MCF 10A (cell line): ENCODE measurements at regions of chr1 and their contacts with region 1.

Region 1: DNA sequence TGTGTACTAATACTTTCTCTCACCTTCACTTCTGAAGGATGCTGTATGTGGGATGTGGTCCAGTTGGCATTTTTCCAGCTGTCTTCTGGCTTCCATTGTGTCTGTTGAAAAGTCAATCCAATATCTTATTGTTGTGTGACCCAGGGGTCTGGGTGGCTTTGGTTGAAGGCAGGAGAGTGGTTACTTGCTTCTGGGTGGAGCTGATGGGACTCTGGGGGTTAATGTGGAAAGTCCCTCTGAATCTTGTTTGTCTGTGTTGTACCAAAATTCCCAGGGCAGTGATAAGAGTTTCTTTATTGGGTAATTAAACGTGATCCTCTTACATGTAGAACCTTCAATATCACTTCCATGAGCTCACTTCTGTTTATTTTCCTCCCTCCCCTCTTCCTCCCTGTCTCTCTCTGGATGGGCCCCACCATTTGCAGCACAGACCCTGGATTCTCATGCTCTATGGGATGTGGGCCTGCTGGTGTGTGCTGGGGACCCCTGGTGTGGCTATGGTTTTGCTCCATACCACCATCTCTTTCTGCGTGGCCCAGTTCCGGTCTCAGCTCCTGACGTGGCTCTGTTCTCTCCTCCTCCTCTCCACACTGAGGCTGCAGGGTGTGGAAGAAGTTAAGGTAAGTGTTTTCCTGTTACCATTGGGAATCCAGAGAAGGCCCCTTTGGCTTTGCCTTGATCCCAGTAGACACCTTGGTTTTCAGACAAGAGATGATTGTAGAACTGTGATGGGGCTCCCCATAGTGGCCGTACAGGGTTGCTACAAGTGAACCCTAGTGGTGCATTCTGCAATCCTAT is 71.5 kb downstream of the HHAT start:
- DNase-seq: peak; percentile 88
- H3K4me3 Mint-ChIP-seq: no peak overlapping the region
- H3K27ac Mint-ChIP-seq: no peak overlapping the region
- H3K4me1 Mint-ChIP-seq: peaks cover 7% of the 10 kb centered on the region
- H3K27me3 Mint-ChIP-seq: no peaks in the 10 kb centered on the region
- CTCF ChIP-seq: peak; percentile 98

Region 2: GRCh38 chr1:210132582-210132981 is 267.7 kb before region 1 on chr1:
- CTCF ChIA-PET with region 1: interaction called, 12 read pairs
- POLR2A ChIA-PET with region 1: no interaction called
- intact Hi-C with region 1: no loop called
- DNase-seq: peak; percentile 69
- H3K4me3 Mint-ChIP-seq: no peak overlapping the region
- H3K27ac Mint-ChIP-seq: no peak overlapping the region
- H3K4me1 Mint-ChIP-seq: no peaks in the 10 kb centered on the region
- H3K27me3 Mint-ChIP-seq: peaks cover 42% of the 10 kb centered on the region
- CTCF ChIP-seq: no peak

Region 3: GRCh38 chr1:210321552-210321951 is 78.7 kb before region 1 on chr1:
- CTCF ChIA-PET with region 1: interaction called, 11 read pairs
- POLR2A ChIA-PET with region 1: interaction called, 5 read pairs
- intact Hi-C with region 1: no loop called
- DNase-seq: peak; percentile 95
- H3K4me3 Mint-ChIP-seq: peak overlapping the region; percentile 4
- H3K27ac Mint-ChIP-seq: peak overlapping the region; percentile 93
- H3K4me1 Mint-ChIP-seq: peaks cover 19% of the 10 kb centered on the region
- H3K27me3 Mint-ChIP-seq: no peaks in the 10 kb centered on the region
- CTCF ChIP-seq: no peak

Region 4: GRCh38 chr1:210342986-210343780 is 57.1 kb before region 1 on chr1:
- CTCF ChIA-PET with region 1: interaction called, 15 read pairs
- POLR2A ChIA-PET with region 1: no interaction called
- intact Hi-C with region 1: no loop called
- DNase-seq: peak; percentile 33
- H3K4me3 Mint-ChIP-seq: no peak overlapping the region
- H3K27ac Mint-ChIP-seq: no peak overlapping the region
- H3K4me1 Mint-ChIP-seq: no peaks in the 10 kb centered on the region
- H3K27me3 Mint-ChIP-seq: no peaks in the 10 kb centered on the region
- CTCF ChIP-seq: no peak

Region 5: DNA sequence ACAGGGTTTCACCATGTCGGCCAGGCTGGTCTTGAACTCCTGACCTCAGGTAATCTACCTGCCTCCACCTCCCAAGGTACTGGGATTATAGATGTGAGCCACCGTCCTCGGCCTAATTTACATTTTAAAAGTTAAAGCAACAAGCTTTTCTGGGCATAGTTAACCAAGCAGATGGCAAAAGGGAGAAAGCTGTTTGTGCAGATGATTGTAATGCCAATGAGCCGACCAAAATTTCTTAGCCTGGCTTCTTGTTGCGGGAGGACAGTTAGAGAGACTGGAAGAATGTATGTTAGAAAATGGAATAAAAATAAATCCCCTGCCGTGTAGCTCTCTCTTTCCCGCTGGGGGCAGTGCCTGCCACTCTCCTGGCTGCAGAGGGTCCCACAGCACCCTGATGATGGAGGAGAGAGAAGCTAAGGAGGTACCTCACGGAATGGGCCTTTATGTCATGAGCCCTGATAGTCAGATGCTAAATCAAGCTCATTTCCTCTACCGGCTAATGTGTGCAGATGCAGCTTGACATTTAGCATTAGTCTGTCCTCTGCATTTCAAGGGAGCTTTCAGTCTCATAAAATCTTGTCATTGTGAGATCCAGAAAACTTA is 15.7 kb after region 1 on chr1:
- CTCF ChIA-PET with region 1: interaction called, 812 read pairs
- POLR2A ChIA-PET with region 1: no interaction called
- intact Hi-C with region 1: no loop called
- DNase-seq: no peak
- H3K4me3 Mint-ChIP-seq: no peak overlapping the region
- H3K27ac Mint-ChIP-seq: no peak overlapping the region
- H3K4me1 Mint-ChIP-seq: no peaks in the 10 kb centered on the region
- H3K27me3 Mint-ChIP-seq: no peaks in the 10 kb centered on the region
- CTCF ChIP-seq: no peak